AG04449 (cell line): ENCODE measurements at regions of chr6 and their contacts with region 1.

Region 1: DNA sequence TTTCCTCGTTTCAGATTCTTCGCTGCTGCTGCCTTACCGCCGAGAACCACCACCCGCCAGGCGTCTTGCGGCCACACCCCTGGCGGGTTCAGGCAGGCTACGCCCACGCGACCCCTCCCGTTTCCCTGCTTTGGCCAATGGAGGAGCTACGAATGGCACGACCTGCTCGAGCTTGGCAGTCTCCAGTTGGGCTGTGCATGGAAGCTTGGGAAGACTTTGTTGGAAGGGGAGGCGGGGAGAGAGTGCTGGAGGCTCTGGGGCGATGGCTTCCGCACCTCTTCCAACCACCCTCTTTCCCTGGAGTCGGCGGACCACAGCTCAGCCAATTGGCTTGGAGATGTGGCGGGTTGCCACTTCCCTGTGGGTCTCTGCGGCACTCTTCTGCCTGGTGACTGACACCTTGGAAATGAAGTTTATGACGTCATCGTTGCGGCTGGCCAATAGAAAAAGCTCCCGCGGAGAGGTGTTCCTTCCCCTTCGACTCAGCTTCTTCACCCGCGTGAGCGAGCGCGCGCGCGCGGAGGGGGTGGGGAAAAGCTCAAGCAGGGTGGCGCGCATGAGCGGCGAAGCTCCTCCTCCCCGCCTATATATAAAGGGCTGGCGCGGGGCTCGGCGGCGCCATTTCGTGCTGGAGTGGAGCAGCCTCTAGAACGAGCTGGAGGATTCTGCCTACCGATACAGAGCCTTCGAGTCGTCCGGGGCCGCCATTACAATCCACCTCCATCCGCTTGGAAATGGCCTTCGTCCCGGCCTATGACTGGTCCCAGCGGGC is 3.4 kb downstream of the BRD2 start:
- DNase-seq: peak; percentile 99
- H3K4me3 ChIP-seq: peak overlapping the region; percentile 92
- CTCF ChIP-seq: no peak

Region 2: GRCh38 chr6:32838114-32838958 is 133.4 kb before region 1 on chr6 and contains the start of gene TAP2:
- CTCF ChIA-PET with region 1: interaction called, 14 read pairs
- POLR2A ChIA-PET with region 1: interaction called, 38 read pairs
- DNase-seq: peak; percentile 47
- H3K4me3 ChIP-seq: peak within 1 kb of the TSS; percentile 96
- CTCF ChIP-seq: peak; percentile 97

Region 3: GRCh38 chr6:32853541-32854375 is 118.0 kb before region 1 on chr6 and contains the starts of genes PSMB9 and TAP1:
- CTCF ChIA-PET with region 1: no interaction called
- POLR2A ChIA-PET with region 1: interaction called, 16 read pairs
- DNase-seq: peak; percentile 51
- H3K4me3 ChIP-seq: peak within 1 kb of the TSS; percentile 89
- CTCF ChIP-seq: peak; percentile 87

Region 4: DNA sequence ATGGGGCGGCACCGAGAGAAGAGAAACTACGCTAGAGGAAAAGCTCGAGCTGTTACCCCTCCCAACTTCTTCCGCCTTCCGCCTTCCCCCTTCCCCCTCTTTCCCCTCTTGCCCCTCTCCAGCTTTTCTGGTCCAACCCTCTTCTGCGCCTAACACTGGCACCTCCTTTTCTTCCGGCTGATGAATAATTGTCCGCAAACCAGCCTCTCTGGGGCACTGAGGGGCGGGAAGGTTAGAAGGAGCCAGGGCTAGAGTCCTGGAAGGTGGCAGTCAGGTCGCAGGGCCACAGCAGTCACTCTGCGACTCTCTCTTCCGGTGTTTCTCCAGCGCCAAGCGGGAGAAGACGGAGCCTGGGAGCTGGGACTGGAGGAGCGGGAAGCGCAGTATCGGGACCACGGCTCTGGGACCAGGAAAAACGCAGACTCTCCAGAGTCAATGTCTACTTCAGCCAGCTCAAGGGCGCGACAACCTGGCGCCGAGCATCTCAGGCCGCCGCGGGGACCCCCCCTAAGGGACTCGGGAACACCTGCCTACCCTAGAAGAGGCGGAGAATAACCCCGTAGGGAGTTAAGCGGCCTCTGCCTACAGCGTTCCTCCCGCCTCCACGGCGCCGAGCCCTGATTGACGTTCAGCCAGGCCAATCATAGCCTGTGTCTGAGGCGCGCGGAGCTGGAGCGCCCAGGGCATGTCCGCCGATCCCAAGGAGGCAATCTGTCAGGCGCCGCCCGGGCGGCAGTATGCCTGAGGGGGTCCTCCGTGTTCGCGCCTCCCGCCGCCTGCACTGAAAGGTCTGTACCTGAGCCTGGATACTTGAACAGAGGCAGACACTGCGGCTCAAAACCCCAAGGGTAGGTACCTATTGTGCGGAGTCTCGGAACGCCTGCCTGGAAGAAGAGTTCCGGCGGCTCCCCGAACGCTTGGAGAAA is 77.4 kb before region 1 on chr6:
- CTCF ChIA-PET with region 1: interaction called, 3 read pairs
- POLR2A ChIA-PET with region 1: interaction called, 34 read pairs
- DNase-seq: peak; percentile 44
- H3K4me3 ChIP-seq: peak overlapping the region; percentile 77
- CTCF ChIP-seq: no peak

Region 5: DNA sequence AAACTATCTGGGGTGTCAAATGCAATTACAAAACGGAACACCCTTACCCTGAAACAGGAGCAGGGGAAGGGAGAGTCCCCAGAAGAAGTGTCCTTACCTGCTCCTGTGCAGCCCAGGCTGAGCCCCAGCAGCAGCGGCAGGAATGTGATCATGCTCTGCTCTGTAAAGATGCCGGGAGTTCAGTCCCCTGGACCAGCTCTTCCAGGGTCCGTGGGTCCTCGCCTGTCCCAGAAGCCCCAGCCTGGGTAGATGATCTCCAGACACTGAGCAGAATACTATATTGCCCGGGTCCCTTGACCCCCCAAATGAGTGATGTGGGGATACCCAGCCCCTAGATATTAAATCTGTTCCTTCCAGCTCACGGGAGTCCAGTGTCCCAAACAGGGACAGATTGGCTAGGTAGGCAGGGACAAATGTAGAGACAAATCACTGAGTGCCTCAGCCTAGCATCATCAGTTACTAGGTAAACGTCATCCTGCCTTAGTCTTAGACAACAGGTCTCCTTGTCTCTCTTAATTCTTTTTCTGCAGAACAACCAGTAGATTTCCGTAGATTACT is 31.0 kb before region 1 on chr6 and contains the start of gene HLA-DMB:
- CTCF ChIA-PET with region 1: interaction called, 3 read pairs
- POLR2A ChIA-PET with region 1: interaction called, 16 read pairs
- DNase-seq: peak; percentile 33
- H3K4me3 ChIP-seq: no peak within 1 kb of the TSS
- CTCF ChIP-seq: no peak

Region 6: DNA sequence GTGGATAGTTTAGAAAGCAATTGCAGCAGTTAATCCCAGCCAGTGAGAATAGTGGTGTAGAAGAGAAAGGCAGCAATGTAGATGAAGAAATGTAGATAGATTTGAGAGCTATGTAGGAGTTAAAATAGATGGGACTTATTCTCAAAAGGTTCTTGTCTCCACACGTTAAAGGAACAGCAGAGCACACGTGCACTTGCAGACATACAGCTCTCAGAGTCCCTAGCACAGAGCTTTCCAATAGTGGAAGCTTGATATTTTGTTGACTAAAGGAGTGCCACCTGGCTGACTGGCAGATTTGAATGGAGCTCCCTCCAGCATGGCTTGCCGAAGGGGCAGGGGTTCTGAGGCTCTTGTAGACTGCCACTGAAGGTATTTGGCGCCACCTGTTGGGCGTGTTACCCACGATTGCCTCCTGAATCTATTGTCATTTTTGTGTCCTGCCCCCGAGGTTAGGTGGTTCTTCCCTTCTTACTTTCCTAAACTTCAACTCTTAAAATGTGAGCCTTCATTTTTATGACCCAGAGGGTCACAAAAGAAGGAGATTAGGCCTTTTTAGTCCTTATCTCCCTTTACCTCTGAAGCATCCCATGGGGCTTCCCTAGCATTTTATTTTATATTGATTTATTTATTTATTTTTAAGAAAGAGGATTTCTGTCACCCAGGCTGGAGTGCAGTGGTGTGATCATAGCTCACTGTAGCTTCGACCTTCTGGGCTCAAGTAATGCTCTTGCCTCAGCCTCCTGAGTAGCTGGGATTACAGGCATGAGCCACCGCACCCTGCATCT is 13.0 kb after region 1 on chr6:
- CTCF ChIA-PET with region 1: interaction called, 142 read pairs
- POLR2A ChIA-PET with region 1: interaction called, 104 read pairs
- DNase-seq: no peak
- H3K4me3 ChIP-seq: no peak overlapping the region
- CTCF ChIP-seq: peak; percentile 82

Region 7: DNA sequence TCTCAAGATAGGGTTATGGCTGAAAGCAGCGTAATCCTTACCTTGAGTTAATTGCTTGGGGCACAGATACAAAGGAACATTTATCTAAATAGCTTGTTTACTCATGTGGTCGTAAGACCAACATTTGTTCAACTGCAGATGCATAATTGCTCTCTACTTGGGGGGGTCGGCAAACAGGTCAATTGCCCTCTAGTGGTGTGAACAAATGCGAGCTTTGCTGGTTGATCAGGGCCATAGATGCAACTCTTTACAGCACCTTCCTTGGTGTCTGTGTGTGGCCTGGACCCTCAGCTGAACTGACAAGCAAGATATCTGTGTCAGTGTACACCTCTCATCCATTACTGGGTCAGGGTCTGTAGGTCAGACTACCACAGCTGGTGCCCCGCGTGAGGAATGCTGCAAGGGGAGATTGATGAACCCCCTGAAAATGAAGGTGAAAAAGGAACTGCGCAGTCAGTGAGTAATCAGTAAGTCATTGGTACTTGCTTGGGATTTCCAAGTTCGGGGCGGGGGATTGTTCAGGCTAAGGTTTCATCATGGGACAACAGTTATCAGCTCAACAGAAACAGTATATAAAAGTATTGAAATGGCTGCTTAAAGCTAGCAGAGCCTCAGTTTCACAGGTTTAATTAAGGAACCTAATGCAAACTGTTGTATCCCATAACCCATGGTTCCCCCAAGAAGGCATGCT is 77.7 kb after region 1 on chr6:
- CTCF ChIA-PET with region 1: no interaction called
- POLR2A ChIA-PET with region 1: no interaction called
- DNase-seq: no peak
- H3K4me3 ChIP-seq: no peak overlapping the region
- CTCF ChIP-seq: no peak

Region 8: GRCh38 chr6:33126101-33126714 is 154.4 kb after region 1 on chr6:
- CTCF ChIA-PET with region 1: no interaction called
- POLR2A ChIA-PET with region 1: no interaction called
- DNase-seq: no peak
- H3K4me3 ChIP-seq: no peak overlapping the region
- CTCF ChIP-seq: peak; percentile 49

Region 9: GRCh38 chr6:33271458-33272274 is 299.9 kb after region 1 on chr6 and contains the starts of genes RPS18 and VPS52:
- CTCF ChIA-PET with region 1: no interaction called
- POLR2A ChIA-PET with region 1: interaction called, 11 read pairs
- DNase-seq: peak; percentile 96
- H3K4me3 ChIP-seq: peak within 1 kb of the TSS; percentile 93
- CTCF ChIP-seq: no peak